ENCODE measurements at regions of chr18 and their contacts with region 1.

Region 1: GRCh38 chr18:35267161-35267651 is 22.8 kb downstream of the ZSCAN30 start:
- DNase-seq: peak; percentile 75
- H3K4me3 Mint-ChIP-seq: peak overlapping the region; percentile 71
- H3K27ac Mint-ChIP-seq: peak overlapping the region; percentile 69
- H3K4me1 Mint-ChIP-seq: peaks cover 25% of the 10 kb centered on the region
- H3K27me3 Mint-ChIP-seq: no peaks in the 10 kb centered on the region

Region 2: DNA sequence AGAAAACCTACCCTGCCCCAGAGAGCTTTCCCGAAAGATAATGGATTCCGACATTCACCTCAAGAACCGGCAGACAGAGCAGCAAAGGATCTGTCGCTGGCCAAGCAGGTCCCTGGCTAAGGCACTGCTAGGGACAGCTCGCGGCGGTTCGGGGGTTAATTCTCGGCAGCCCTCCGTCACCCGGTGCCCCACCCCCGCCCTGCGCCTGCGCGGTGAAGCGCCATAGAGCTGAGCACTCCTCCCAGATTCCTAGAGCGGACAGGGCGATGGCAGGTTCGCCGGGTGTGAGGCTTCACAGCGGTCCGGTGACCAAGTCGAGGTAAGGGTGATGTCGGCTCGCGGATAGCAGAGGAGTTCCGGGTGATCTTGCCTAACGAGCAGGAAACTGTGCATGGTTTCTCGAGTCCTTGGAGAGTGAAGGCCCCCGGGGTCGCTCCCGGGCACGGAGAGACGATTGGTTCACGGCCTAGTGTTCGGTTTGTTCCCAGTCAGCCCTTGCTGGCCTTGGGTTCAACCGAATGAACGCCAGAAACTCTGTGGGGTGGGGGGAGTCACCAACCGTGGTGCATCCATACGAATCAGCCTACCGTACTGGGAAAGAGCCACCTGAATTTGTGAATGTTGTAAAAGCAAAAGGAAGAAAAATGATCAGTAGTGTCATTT is 23.0 kb after region 1 on chr18 and contains the start of gene ZSCAN30:
- CTCF ChIA-PET with region 1: interaction called, 4 read pairs
- POLR2A ChIA-PET with region 1: interaction called, 15 read pairs
- intact Hi-C with region 1: loop called (anchors 1 kb)
- DNase-seq: peak; percentile 97
- H3K4me3 Mint-ChIP-seq: peak within 1 kb of the TSS; percentile 98
- H3K27ac Mint-ChIP-seq: peak within 1 kb of the TSS; percentile 93
- H3K4me1 Mint-ChIP-seq: peaks cover 37% of the 10 kb centered on the region
- H3K27me3 Mint-ChIP-seq: no peaks in the 10 kb centered on the region
- total RNA-seq, gene ZSCAN30: 17.9 to 19.6 TPM